Mammary epithelial cell (primary cell): ENCODE measurements at regions of chr17 and their contacts with region 1.

Region 1: DNA sequence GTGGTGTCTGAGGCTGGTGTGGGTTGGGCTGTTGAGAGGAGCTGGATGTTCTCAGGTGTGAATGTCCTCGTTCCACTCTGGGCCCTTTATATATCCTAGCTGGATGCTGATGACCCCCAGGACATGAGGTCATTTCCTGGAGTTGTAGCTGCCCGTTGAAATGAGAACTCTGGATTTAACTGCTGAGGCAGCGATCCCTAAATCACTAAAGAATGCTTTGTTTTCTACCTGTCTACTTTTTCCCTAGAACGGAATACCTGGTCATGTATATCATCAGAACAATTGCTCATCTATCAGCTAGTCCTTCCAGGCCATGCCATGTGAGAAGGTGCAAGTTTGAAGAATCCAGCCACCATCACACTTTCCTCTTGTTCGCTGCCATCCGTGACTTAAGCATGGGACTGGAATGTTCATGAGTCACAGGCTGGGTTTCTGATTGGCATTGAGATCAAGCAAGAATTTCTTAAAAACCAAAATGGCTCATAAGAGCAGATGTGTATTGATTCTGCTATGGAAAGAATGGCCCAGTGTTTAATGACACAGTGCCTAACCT is at the start of gene KRTAP2-3:
- DNase-seq: peak; percentile 97
- H3K4me3 ChIP-seq: no peak within 1 kb of the TSS
- H3K27ac ChIP-seq: peak within 1 kb of the TSS; percentile 60
- H3K4me1 ChIP-seq: peaks cover 33% of the 10 kb centered on the region
- H3K27me3 ChIP-seq: no peaks in the 10 kb centered on the region
- CTCF ChIP-seq: no peak
- total RNA-seq, gene KRTAP2-3: 4.8 to 27.5 TPM

Region 2: GRCh38 chr17:40803617-40804082 is 256.5 kb before region 1 on chr17:
- CTCF ChIA-PET with region 1: no interaction called
- dilution Hi-C with region 1: no loop called
- in situ Hi-C with region 1: no loop called
- intact Hi-C with region 1: loop called (anchors 5 kb)
- DNase-seq: peak; percentile 65
- H3K4me3 ChIP-seq: no peak overlapping the region
- H3K27ac ChIP-seq: no peak overlapping the region
- H3K4me1 ChIP-seq: peaks cover 4% of the 10 kb centered on the region
- H3K27me3 ChIP-seq: no peaks in the 10 kb centered on the region
- CTCF ChIP-seq: peak; percentile 89 to 93

Region 3: DNA sequence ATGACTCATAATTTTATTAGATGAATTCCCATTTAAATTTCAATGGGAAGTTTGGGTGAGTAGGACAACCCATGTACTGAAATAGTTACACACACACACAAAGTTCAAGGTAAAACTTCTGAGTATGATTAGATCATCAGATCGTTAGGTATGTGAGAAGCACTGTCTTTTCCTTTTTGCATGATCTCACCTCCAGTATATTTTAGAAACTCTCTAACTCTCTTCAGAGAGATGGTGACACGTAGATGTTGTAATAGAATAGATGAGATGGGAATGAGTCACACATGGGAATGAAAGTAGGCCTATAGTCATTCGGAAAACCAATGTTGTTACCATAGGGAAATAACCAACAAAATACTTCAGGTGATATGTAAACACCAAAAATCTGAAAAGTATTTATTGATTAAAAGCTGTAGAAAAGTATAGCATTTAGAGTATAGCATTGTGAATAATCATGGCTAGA is 144.9 kb before region 1 on chr17:
- CTCF ChIA-PET with region 1: no interaction called
- dilution Hi-C with region 1: no loop called
- in situ Hi-C with region 1: no loop called
- intact Hi-C with region 1: loop called (anchors 2 kb)
- DNase-seq: peak; percentile 99
- H3K4me3 ChIP-seq: no peak overlapping the region
- H3K27ac ChIP-seq: peak overlapping the region; percentile 100
- H3K4me1 ChIP-seq: peaks cover 56% of the 10 kb centered on the region
- H3K27me3 ChIP-seq: no peaks in the 10 kb centered on the region
- CTCF ChIP-seq: no peak

Region 4: GRCh38 chr17:41071606-41072360 is 11.7 kb after region 1 on chr17:
- CTCF ChIA-PET with region 1: no interaction called
- dilution Hi-C with region 1: no loop called
- in situ Hi-C with region 1: no loop called
- intact Hi-C with region 1: no loop called
- DNase-seq: no peak
- H3K4me3 ChIP-seq: no peak overlapping the region
- H3K27ac ChIP-seq: no peak overlapping the region
- H3K4me1 ChIP-seq: peaks cover 5% of the 10 kb centered on the region
- H3K27me3 ChIP-seq: no peaks in the 10 kb centered on the region
- CTCF ChIP-seq: no peak

Region 5: DNA sequence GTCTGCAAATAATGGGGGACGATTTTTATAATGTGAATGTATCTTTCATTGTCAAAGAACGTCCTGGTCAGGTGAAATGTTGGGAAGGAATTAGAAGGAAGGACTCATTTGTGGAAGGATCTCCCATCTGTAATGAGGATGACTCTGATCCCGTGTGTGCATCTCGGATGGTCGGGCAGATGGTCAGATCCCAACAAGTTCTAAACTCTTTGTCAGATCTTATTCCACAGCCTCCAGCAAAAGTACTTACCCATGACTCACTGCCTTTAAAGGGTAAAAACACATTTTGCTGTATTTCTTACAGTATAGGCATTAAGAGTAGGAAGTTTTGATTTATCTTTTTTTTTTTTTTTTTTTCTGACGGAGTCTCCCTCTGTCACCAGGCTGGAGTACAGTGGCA is 38.3 kb after region 1 on chr17:
- CTCF ChIA-PET with region 1: no interaction called
- dilution Hi-C with region 1: no loop called
- in situ Hi-C with region 1: no loop called
- intact Hi-C with region 1: loop called (anchors 2 kb)
- DNase-seq: peak; percentile 76
- H3K4me3 ChIP-seq: no peak overlapping the region
- H3K27ac ChIP-seq: peak overlapping the region; percentile 40
- H3K4me1 ChIP-seq: peaks cover 13% of the 10 kb centered on the region
- H3K27me3 ChIP-seq: no peaks in the 10 kb centered on the region
- CTCF ChIP-seq: no peak

Region 6: DNA sequence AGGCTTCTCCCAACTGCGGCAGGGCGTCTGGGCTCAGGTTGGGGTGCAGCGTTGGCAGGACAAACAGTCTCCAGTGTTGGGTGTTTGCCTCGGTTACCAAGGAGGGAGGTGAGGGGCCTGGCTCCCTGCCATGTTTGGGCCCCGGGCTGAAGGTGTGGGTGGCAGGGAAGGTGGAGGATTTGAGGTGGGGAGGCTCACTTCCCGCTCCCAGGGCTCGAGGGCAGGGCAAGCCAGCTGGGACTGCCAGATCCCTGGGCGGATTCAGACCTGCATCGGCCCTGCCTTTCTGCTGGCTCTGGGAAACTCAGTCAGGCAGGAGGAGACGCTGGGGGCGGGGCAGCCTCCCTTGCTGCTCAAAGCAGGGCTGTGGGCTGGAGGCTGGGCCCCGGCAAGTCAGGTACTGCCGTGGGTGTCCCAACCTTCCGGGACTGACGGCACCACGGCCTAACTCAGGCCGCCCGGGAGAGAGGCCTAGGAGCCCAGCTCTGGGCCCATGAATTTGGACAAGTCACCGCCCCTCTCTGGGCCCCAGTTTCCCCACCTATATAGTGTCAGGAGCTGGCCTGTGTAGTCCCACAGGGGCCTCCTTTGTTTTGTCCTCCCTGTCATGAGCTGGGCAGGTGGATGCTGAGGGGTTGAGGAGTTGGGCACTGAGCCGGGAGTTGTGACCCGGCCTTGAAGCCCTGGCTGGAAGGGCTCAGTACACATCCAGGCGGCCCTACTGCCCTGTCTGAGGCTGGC is 595.7 kb after region 1 on chr17:
- CTCF ChIA-PET with region 1: no interaction called
- dilution Hi-C with region 1: no loop called
- in situ Hi-C with region 1: no loop called
- intact Hi-C with region 1: loop called (anchors 10 kb)
- DNase-seq: peak; percentile 100
- H3K4me3 ChIP-seq: no peak overlapping the region
- H3K27ac ChIP-seq: peak overlapping the region; percentile 100
- H3K4me1 ChIP-seq: peaks cover 92% of the 10 kb centered on the region
- H3K27me3 ChIP-seq: no peaks in the 10 kb centered on the region
- CTCF ChIP-seq: no peak